GM12878 (cell line): ENCODE measurements at regions of chr12 and their contacts with region 1.

Region 1: DNA sequence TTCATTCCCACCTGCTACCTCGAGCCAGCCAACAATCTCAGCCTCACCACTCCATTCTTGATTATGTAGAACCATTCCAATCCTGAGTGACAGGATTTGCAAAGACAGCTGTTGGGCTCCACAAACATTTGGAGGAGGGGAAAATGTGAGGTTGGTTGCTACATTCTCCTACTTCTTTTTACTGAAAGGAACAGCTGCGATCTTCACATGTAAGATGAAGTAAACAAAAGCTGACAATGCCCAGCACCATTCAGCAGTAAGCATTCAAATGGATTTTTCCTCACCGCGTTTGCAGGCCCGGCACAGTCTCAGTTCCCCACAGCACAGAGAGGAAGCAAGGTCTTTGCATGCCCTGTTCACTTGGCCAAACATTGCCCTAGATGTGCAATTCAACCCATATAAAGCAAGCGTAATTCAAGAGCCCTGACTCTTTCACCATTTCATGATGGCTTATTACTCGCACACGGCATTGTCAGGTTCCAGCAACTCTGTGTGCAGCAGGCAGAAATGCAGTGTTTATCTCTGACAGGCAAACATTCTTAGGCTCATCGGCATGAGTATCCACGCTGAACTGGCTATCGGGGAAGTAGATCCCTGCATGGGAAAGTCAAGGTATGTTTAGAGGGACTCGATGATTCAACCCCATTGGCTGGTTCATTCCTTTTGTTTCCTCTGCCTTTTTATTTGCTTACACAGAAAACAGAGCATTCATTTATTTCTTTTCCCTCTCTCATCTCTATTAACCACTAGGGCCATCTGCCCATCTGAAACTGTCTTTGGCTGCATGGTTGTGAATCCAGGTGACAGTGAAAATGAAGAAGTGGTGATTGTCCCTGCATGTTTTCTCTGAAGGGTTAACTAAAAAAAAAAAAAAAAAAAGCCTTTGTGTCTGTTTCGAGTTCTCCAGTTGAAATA is 236.1 kb upstream of the PLEKHG7 start:
- DNase-seq: peak; percentile 90
- ATAC-seq: peak; percentile 39
- H3K4me3 ChIP-seq: peak overlapping the region; percentile 82
- H3K27ac ChIP-seq: peak overlapping the region; percentile 99
- H3K4me1 ChIP-seq: peaks cover 62% of the 10 kb centered on the region
- H3K27me3 ChIP-seq: no peaks in the 10 kb centered on the region
- CTCF ChIP-seq: no peak
- EP300 ChIP-seq: peak; percentile 65 to 70; a peak in 3 of 4 replicates
- POLR2A ChIP-seq: peak; percentile 85
- RAD21 ChIP-seq: peak; percentile 5

Region 2: DNA sequence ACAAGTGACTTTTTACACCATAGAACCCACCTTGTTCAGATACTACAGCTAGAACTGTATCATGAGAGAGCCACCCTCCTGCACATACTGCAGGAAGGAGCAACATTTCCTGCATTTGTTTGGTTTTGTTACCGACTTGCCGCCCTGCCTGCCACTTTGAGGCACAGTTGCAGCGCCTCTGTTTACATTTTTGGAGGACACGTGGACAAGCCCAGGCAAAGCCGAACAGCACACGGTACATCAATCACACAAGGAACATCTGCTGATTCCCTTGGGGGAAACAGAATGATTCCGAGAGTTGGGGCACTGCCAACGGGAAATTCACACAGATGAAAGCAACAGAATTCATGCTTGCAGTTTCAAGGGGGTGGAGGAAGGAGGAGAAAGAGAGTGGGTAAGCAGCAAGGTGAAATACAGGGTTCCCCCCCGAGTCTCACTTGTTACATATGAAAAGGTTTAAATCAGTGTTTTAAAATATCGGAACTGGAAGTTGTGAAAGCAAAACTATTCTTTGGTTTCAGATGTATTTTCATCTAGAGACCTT is 431.7 kb before region 1 on chr12:
- CTCF ChIA-PET with region 1: no interaction called
- POLR2A ChIA-PET with region 1: interaction called, 3 read pairs
- RAD21 ChIA-PET with region 1: no interaction called
- SMC1A ChIA-PET with region 1: interaction called, 3 read pairs
- in situ Hi-C with region 1: no loop called
- intact Hi-C with region 1: loop called (anchors 10 kb)
- DNase-seq: peak; percentile 99
- ATAC-seq: peak; percentile 84
- H3K4me3 ChIP-seq: peak overlapping the region; percentile 27
- H3K27ac ChIP-seq: peak overlapping the region; percentile 80
- H3K4me1 ChIP-seq: peaks cover 13% of the 10 kb centered on the region
- H3K27me3 ChIP-seq: no peaks in the 10 kb centered on the region
- CTCF ChIP-seq: no peak
- EP300 ChIP-seq: peak; percentile 89 to 90
- POLR2A ChIP-seq: peak; percentile 36; the same call in 1 of the 2 replicates
- RAD21 ChIP-seq: peak; percentile 41

Region 3: GRCh38 chr12:92439407-92439779 is 27.3 kb before region 1 on chr12:
- CTCF ChIA-PET with region 1: interaction called, 5 read pairs
- POLR2A ChIA-PET with region 1: interaction called, 7 read pairs
- RAD21 ChIA-PET with region 1: interaction called, 24 read pairs
- SMC1A ChIA-PET with region 1: interaction called, 19 read pairs
- in situ Hi-C with region 1: no loop called
- intact Hi-C with region 1: no loop called
- DNase-seq: no peak
- ATAC-seq: peak; percentile 15
- H3K4me3 ChIP-seq: no peak overlapping the region
- H3K27ac ChIP-seq: peak overlapping the region; percentile 29; the same call in 1 of the 2 replicates
- H3K4me1 ChIP-seq: peaks cover 59% of the 10 kb centered on the region
- H3K27me3 ChIP-seq: no peaks in the 10 kb centered on the region
- CTCF ChIP-seq: no peak
- EP300 ChIP-seq: no peak
- POLR2A ChIP-seq: no peak
- RAD21 ChIP-seq: no peak

Region 4: GRCh38 chr12:92485351-92486348 is 19.0 kb after region 1 on chr12:
- CTCF ChIA-PET with region 1: interaction called, 4 read pairs
- POLR2A ChIA-PET with region 1: interaction called, 9 read pairs
- RAD21 ChIA-PET with region 1: interaction called, 39 read pairs
- SMC1A ChIA-PET with region 1: interaction called, 51 read pairs
- in situ Hi-C with region 1: no loop called
- intact Hi-C with region 1: loop called (anchors 1 kb)
- DNase-seq: no peak
- ATAC-seq: peak; percentile 58
- H3K4me3 ChIP-seq: no peak overlapping the region
- H3K27ac ChIP-seq: peak overlapping the region; percentile 90
- H3K4me1 ChIP-seq: peaks cover 53% of the 10 kb centered on the region
- H3K27me3 ChIP-seq: no peaks in the 10 kb centered on the region
- CTCF ChIP-seq: no peak
- EP300 ChIP-seq: no peak
- POLR2A ChIP-seq: no peak
- RAD21 ChIP-seq: no peak

Region 5: GRCh38 chr12:92528586-92528985 is 61.9 kb after region 1 on chr12:
- CTCF ChIA-PET with region 1: no interaction called
- POLR2A ChIA-PET with region 1: no interaction called
- RAD21 ChIA-PET with region 1: no interaction called
- SMC1A ChIA-PET with region 1: no interaction called
- in situ Hi-C with region 1: no loop called
- intact Hi-C with region 1: no loop called
- DNase-seq: no peak
- ATAC-seq: no peak
- H3K4me3 ChIP-seq: no peak overlapping the region
- H3K27ac ChIP-seq: no peak overlapping the region
- H3K4me1 ChIP-seq: peaks cover 2% of the 10 kb centered on the region; the same call in 1 of the 2 replicates
- H3K27me3 ChIP-seq: no peaks in the 10 kb centered on the region
- CTCF ChIP-seq: no peak
- EP300 ChIP-seq: no peak
- POLR2A ChIP-seq: no peak
- RAD21 ChIP-seq: no peak

Region 6: GRCh38 chr12:92546635-92547348 is 80.1 kb after region 1 on chr12:
- CTCF ChIA-PET with region 1: interaction called, 18 read pairs
- POLR2A ChIA-PET with region 1: interaction called, 3 read pairs
- RAD21 ChIA-PET with region 1: interaction called, 11 read pairs
- SMC1A ChIA-PET with region 1: interaction called, 18 read pairs
- in situ Hi-C with region 1: loop called (anchors 25 kb)
- intact Hi-C with region 1: no loop called
- DNase-seq: no peak
- ATAC-seq: peak; percentile 60
- H3K4me3 ChIP-seq: no peak overlapping the region
- H3K27ac ChIP-seq: no peak overlapping the region
- H3K4me1 ChIP-seq: peaks cover 43% of the 10 kb centered on the region
- H3K27me3 ChIP-seq: no peaks in the 10 kb centered on the region
- CTCF ChIP-seq: no peak
- EP300 ChIP-seq: peak in 1 of 2 experiments; percentile 52; a peak in 2 of 4 replicates
- POLR2A ChIP-seq: no peak
- RAD21 ChIP-seq: no peak

Region 7: GRCh38 chr12:92561543-92561899 is 94.9 kb after region 1 on chr12:
- CTCF ChIA-PET with region 1: interaction called, 6 read pairs
- POLR2A ChIA-PET with region 1: interaction called, 10 read pairs
- RAD21 ChIA-PET with region 1: interaction called, 38 read pairs
- SMC1A ChIA-PET with region 1: interaction called, 32 read pairs
- in situ Hi-C with region 1: loop called (anchors 25 kb)
- intact Hi-C with region 1: loop called (anchors 2 kb)
- DNase-seq: no peak
- ATAC-seq: peak; percentile 13
- H3K4me3 ChIP-seq: peak overlapping the region; percentile 50; the same call in 1 of the 2 replicates
- H3K27ac ChIP-seq: peak overlapping the region; percentile 36
- H3K4me1 ChIP-seq: peaks cover 32% of the 10 kb centered on the region
- H3K27me3 ChIP-seq: no peaks in the 10 kb centered on the region
- CTCF ChIP-seq: no peak
- EP300 ChIP-seq: peak in 1 of 2 experiments; percentile 35; a peak in 1 of 4 replicates
- POLR2A ChIP-seq: no peak
- RAD21 ChIP-seq: no peak